ENCODE measurements at regions of chr5 and their contacts with region 1.

Region 1: DNA sequence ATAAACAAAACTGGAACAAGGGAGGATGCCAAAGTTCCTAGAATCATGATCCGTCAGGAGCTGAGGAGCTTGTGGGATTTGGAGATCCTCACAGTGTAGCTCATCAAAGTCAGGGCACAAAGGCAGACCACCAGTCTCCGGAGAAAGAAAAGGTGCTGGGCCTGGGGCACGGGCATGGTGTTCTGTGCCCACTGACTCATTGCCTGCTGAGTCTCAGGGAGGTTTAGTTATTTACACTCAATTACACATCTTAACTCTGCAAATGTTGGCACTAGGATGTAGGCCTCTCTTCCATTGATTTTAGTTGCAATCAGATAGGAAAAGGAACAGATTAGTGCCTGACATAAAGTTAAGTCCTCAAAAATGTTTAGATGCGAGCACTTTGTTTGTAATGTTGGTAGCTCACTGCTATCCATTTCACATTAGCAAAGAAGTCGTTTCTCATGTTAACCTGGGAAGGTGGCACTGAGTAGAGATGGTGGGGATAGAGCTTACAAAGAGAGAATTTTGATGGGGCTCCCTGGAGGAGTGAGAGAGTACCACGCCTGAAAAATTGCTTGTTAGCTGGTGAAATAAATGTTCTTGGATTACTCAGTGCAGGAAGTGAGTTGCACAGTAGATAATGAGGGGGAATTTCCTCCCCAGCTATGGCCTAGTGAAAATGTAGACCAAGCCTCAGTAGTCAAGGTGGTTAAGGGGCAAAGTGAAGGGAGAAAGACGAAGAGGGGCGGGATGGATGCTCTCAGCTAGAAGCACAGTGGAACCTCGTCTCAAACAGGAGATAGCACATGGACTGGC is 109.5 kb upstream of the CD180 start:
- DNase-seq: no peak
- ATAC-seq: peak in 2 of 4 donors; percentile 21 to 31
- H3K4me3 ChIP-seq: no peak overlapping the region
- H3K27ac ChIP-seq: peak overlapping the region in 10 of 12 donors; percentile 11 to 70 (median 41)
- H3K4me1 ChIP-seq: peaks cover 0 to 44% (median 6%) of the 10 kb centered on the region in 12 donors
- H3K27me3 ChIP-seq: no peaks in the 10 kb centered on the region
- CTCF ChIP-seq: no peak
- POLR2A ChIP-seq: no peak

Region 2: DNA sequence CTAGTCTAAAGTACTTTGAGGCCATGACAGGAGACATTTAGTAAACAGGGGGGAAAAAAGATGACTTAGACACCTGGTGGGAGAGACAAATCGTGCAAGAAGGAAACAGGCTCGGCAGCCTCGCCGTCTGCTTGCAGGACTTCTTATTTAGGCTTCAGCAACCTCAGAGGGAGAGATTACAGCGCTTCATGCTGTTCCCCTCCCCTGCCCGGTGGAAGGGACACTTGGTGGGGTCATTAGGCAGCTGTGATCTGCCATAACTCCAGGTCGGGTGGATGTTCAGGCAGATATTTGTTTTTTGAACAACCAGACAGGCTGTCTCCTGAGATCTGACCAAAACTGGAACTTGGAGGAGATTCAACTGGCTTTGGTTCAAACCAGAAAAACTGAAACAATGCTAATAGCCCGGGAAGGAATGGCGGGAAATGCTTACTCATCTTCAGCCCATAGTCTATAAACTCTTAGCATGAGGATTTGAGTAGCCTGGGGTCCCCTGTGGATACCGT is 71.4 kb before region 1 on chr5:
- intact Hi-C with region 1: no loop called
- DNase-seq: peak in 3 of 5 donors; percentile 38 to 57 (median 49)
- ATAC-seq: peak in 3 of 4 donors; percentile 71 to 84 (median 77)
- H3K4me3 ChIP-seq: peak overlapping the region in 9 of 12 donors; percentile 4 to 36 (median 31)
- H3K27ac ChIP-seq: peak overlapping the region in 8 of 12 donors; percentile 6 to 82 (median 44)
- H3K4me1 ChIP-seq: peaks cover 0 to 21% (median 11%) of the 10 kb centered on the region in 12 donors
- H3K27me3 ChIP-seq: no peaks in the 10 kb centered on the region
- CTCF ChIP-seq: no peak
- POLR2A ChIP-seq: no peak

Region 3: DNA sequence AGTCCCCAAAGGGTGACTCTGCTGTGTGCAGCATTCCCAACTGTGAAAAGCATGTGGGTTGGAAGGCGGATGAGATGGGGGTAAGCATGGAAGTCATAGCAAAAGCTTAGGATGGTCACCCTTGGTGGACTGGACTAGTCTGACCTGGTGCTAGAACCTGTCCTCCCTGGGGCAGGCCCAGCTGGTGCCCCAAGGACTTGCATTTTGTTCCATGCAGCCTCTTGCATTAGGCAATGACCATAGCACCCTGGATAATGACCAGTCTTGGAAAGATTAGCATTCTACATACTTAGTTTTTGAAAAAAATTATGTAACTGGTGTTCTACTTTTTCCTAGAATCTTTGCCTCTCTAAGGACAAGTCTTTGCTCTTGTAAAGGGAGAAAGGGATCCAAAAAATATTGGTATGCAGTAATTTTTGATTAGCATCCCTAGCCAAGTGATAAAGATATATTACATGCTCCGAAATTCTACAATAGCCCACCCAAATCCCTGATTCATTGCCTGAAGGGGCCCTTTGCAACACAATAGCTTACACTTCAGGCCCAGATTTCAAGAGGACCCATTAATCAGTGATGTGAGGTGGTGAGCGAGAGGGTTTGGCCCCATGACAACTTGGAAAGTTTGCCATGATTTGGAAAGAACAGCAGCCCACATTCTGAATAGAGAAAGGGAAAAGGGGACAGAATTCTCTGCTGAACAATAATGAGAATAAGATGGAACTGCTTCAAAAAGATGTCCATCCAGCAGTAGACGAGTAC is 16.2 kb before region 1 on chr5:
- intact Hi-C with region 1: loop called in 1 of 10 experiments (anchors 2 kb)
- DNase-seq: peak in 2 of 5 donors; percentile 15 to 44
- ATAC-seq: peak; percentile 44 to 65 (median 60)
- H3K4me3 ChIP-seq: no peak overlapping the region
- H3K27ac ChIP-seq: peak overlapping the region in 9 of 12 donors; percentile 9 to 73 (median 41)
- H3K4me1 ChIP-seq: peaks cover 0 to 37% (median 5%) of the 10 kb centered on the region in 12 donors
- H3K27me3 ChIP-seq: no peaks in the 10 kb centered on the region
- CTCF ChIP-seq: no peak
- POLR2A ChIP-seq: no peak

Region 4: DNA sequence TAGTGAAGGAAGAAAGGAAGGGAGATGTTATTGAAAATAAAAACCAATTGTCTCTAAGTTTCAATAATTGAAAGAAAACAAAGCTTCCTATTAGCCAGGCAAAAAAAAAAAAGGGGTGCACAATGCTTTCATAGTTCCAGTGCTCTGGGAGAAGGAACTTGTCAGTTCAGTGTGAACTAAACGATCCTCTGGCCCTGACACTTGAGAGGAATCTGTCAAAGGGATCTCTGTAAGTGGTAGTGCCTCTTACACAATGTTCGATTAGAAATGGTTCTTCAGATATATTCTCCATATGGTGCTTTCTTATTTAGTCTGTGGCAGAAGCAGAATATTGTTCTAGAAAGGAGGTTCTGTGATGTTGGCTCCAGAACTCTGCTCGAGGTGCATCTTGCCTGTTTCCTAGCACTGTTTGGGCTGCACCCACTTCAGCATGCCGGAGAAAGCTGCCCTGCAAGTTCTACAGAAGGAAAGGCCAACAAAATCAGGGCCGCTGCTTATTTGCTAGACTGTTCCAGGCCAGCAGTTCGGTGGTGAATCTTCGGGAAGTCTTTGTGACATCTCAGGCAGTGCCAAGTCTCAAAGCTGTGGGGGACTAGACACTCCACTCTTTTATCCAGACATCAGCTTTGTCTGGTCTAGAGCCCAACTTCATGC is 1000.4 kb after region 1 on chr5:
- intact Hi-C with region 1: no loop called
- DNase-seq: no peak
- ATAC-seq: no peak
- H3K4me3 ChIP-seq: no peak overlapping the region
- H3K27ac ChIP-seq: no peak overlapping the region
- H3K4me1 ChIP-seq: peaks cover 0 to 12% (median 2%) of the 10 kb centered on the region in 12 donors
- H3K27me3 ChIP-seq: no peaks in the 10 kb centered on the region
- CTCF ChIP-seq: no peak
- POLR2A ChIP-seq: no peak